Ascending aorta (tissue), 2 donors: ENCODE measurements at regions of chr17 and their contacts with region 1.

Region 1: GRCh38 chr17:16589097-16589969 is 20.3 kb upstream of the ZNF287 start:
- DNase-seq: peak; percentile 68 to 96
- H3K4me3 ChIP-seq: peak overlapping the region; percentile 72 to 78
- H3K27ac ChIP-seq: peak overlapping the region; percentile 58 to 71
- H3K4me1 ChIP-seq: no peaks in the 10 kb centered on the region
- H3K27me3 ChIP-seq: no peaks in the 10 kb centered on the region
- CTCF ChIP-seq: peak; percentile 90 to 99 (median 99)

Region 2: GRCh38 chr17:16453493-16453851 is 135.9 kb before region 1 on chr17:
- intact Hi-C with region 1: loop called (anchors 5 kb)
- DNase-seq: no peak
- H3K4me3 ChIP-seq: no peak overlapping the region
- H3K27ac ChIP-seq: no peak overlapping the region
- H3K4me1 ChIP-seq: no peaks in the 10 kb centered on the region
- H3K27me3 ChIP-seq: no peaks in the 10 kb centered on the region
- CTCF ChIP-seq: no peak

Region 3: GRCh38 chr17:16537130-16537458 is 52.2 kb before region 1 on chr17:
- intact Hi-C with region 1: loop called (anchors 1 kb)
- DNase-seq: no peak
- H3K4me3 ChIP-seq: peak overlapping the region in 1 of 2 donors; percentile 71
- H3K27ac ChIP-seq: no peak overlapping the region
- H3K4me1 ChIP-seq: peaks cover 0 to 3% of the 10 kb centered on the region in 2 donors
- H3K27me3 ChIP-seq: no peaks in the 10 kb centered on the region
- CTCF ChIP-seq: no peak

Region 4: DNA sequence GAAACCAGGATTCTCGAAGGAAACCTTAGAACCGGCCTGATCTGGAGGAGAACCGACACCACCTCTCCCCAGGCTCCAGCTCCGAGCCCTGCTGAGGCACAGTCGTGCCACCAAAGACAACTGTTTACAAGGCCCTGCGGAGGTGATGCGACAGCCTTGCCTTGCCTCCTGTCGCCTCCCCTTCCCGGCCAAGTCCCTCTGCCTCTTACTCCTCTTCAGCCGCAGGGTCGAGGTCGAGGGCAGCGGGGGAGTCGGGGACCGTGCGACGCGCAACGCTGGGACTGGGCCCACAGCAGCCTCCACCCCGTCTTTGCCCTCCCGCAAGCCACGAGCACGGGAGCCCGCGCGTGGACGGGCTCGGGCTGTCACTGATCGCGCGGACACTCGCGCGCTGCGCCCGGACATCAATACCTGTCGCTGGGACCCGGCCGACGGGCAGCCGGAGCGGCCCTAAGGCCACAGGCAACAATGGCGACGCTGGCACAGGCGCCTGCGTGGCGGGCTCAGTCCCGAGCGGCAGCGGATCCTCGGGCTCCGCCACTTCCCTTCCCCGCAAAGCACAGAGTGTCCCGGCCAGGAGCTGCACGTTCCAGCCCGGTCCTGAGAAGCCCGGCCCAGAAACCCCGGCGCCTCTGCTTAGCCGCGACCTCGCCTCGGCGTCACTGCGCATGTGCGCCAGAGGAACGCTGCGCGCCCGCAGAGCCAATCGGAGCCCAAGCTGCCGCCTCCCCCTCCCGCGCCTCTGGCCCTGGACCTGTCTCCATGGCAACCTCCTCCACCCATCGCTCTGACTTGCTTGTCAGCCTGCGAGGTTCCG is 20.6 kb before region 1 on chr17 and contains the start of gene ZNF287:
- intact Hi-C with region 1: loop called (anchors 1 kb)
- DNase-seq: peak; percentile 71 to 96
- H3K4me3 ChIP-seq: peak within 1 kb of the TSS; percentile 71 to 89
- H3K27ac ChIP-seq: peak within 1 kb of the TSS; percentile 64 to 81
- H3K4me1 ChIP-seq: peaks cover 0 to 5% of the 10 kb centered on the region in 2 donors
- H3K27me3 ChIP-seq: no peaks in the 10 kb centered on the region
- CTCF ChIP-seq: no peak
- total RNA-seq, gene ZNF287: 2.9 TPM